ENCODE measurements at regions of chr6 and their contacts with region 1.

Region 1: DNA sequence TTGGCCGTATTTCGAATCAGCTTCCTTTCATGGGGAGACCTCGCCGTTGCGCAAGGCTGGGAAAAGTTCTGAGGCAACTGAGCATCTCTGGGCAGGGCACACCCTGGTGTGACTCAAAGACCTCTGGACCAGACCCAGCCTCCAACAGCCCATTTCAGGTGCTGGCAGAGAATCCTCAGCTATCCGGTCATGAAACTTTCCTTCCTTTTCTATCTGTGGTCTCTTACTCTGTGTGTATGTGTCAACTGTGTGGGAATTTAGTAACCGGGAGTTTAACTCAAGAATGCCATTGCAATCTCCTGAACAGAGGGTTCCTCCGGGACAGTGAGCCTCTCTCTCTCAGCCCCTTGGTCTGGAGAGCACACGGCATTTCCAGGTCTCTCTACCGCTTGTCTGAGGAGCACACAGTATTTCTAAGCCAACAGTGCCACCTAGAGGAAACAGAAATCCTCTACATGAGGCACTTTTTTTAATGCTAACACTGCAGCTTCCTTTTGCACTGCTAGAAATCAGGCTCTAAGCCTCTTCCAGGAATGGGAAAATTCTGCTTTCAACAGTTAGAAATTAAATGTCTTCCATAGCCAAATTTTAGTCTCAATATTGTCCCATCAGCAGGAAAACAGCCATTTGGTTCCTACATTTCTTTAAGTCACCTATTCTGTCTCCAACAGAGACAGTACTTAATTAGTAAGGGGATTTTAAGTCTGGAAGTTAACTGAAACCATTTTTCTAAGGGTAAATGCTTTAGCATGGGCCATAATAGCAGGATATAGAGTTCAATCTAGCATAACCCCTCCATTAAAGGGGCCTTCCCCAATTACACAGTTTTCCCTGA is 32.7 kb downstream of the PLN start:
- H3K4me3 ChIP-seq: no peak overlapping the region
- H3K27ac ChIP-seq: no peak overlapping the region
- H3K4me1 ChIP-seq: no peaks in the 10 kb centered on the region
- CTCF ChIP-seq: no peak

Region 2: DNA sequence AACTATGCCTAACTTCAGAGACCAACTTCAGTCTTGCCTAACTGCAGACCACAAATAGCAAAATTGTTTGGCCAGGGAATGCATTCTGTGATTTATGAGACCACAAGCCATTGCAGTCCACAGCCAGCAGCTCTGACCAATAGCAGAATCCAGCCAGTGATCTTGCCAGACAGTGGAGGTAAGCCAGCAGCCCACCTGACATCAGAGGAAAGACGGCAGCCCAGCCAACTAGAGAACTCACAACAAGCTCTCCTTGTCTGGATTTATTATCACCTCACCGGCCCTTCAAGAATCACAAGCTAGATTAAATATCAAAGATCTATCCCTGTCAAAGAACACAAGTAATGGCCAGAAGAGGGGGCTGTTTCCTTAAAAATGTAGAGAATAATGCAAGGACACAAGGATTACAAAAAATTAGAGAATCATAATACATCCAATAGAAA is 740.2 kb before region 1 on chr6:
- CTCF ChIA-PET with region 1: interaction called, 12 read pairs
- POLR2A ChIA-PET with region 1: no interaction called
- H3K4me3 ChIP-seq: no peak overlapping the region
- H3K27ac ChIP-seq: no peak overlapping the region
- H3K4me1 ChIP-seq: no peaks in the 10 kb centered on the region
- CTCF ChIP-seq: 0 out of 2 replicates have a peak, but pooled peaks have one; percentile 39

Region 3: GRCh38 chr6:118283766-118284165 is 297.0 kb before region 1 on chr6:
- CTCF ChIA-PET with region 1: interaction called, 31 read pairs
- POLR2A ChIA-PET with region 1: no interaction called
- H3K4me3 ChIP-seq: no peak overlapping the region
- H3K27ac ChIP-seq: no peak overlapping the region
- H3K4me1 ChIP-seq: no peaks in the 10 kb centered on the region
- CTCF ChIP-seq: peak; percentile 47; the same call in 1 of the 2 replicates

Region 4: DNA sequence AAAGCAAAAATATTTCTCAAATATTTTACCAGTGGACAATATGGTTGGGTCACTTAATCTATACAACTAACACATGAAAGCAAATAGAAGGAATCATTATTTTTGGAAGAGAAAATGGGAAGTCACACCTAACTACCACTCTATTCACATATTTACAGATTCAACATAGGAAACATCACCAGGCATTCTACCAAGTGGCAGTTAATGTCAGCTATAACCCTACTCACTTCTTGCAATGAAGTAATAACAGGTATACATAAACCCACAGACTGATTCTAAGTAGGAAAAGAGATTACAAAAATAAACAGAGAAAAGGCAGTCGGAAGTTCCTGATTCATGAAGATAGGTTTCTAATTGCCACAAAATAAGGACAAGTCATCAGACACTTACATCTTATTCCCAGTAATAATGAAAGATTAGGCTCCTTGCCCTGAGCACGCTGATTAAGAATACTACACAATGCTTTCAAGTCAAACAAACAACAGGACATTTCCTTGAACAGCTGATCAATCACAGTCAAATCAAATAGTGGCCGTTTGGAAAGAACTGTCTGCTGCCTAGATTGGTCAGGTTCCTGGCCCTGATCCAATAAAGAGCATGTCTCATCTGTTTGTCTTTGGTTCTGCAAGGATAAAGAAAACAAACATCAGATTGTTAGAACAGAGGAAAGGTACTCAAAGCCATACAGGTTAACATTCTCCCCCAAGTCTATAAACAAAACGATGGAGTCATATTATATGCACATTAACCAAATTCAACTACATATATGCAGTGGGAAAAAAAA is 111.9 kb before region 1 on chr6:
- CTCF ChIA-PET with region 1: interaction called, 11 read pairs
- POLR2A ChIA-PET with region 1: no interaction called
- H3K4me3 ChIP-seq: no peak overlapping the region
- H3K27ac ChIP-seq: no peak overlapping the region
- H3K4me1 ChIP-seq: peaks cover 12% of the 10 kb centered on the region
- CTCF ChIP-seq: no peak

Region 5: GRCh38 chr6:118551063-118552053 is 29.4 kb before region 1 on chr6:
- CTCF ChIA-PET with region 1: interaction called, 12 read pairs
- POLR2A ChIA-PET with region 1: no interaction called
- H3K4me3 ChIP-seq: no peak overlapping the region
- H3K27ac ChIP-seq: no peak overlapping the region
- H3K4me1 ChIP-seq: no peaks in the 10 kb centered on the region; the same call in 1 of the 2 replicates
- CTCF ChIP-seq: peak; percentile 40

Region 6: GRCh38 chr6:118565311-118565960 is 15.4 kb before region 1 on chr6:
- CTCF ChIA-PET with region 1: interaction called, 16 read pairs
- POLR2A ChIA-PET with region 1: no interaction called
- H3K4me3 ChIP-seq: no peak overlapping the region
- H3K27ac ChIP-seq: no peak overlapping the region
- H3K4me1 ChIP-seq: no peaks in the 10 kb centered on the region
- CTCF ChIP-seq: peak; percentile 63

Region 7: GRCh38 chr6:118596774-118597320 is 16.0 kb after region 1 on chr6:
- CTCF ChIA-PET with region 1: interaction called, 11 read pairs
- POLR2A ChIA-PET with region 1: no interaction called
- H3K4me3 ChIP-seq: no peak overlapping the region
- H3K27ac ChIP-seq: no peak overlapping the region
- H3K4me1 ChIP-seq: no peaks in the 10 kb centered on the region
- CTCF ChIP-seq: no peak

Region 8: DNA sequence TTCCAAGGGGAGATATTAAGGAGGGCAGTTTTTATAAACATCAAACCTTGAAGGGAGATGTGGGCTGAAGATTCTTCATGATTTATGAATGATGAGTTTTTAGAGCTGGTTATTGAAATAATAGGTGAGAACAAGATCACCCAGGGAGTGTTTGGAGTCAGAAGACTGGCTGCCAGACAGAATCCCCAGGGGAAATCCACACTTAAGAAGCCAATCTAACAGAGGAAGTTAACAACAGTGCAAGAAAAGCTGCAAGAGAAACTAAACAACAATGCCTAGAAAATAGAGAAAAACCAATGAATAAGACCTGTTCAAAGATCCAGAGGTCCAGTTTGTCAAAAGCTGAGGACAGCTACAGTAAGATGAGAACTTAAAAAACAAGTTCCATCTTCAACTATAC is 936.6 kb after region 1 on chr6:
- CTCF ChIA-PET with region 1: no interaction called
- POLR2A ChIA-PET with region 1: no interaction called
- H3K4me3 ChIP-seq: no peak overlapping the region
- H3K27ac ChIP-seq: no peak overlapping the region
- H3K4me1 ChIP-seq: no peaks in the 10 kb centered on the region
- CTCF ChIP-seq: no peak

Measured in HEK293 (cell line).